SK-N-SH (cell line): ENCODE measurements at regions of chr5 and their contacts with region 1.

Region 1: DNA sequence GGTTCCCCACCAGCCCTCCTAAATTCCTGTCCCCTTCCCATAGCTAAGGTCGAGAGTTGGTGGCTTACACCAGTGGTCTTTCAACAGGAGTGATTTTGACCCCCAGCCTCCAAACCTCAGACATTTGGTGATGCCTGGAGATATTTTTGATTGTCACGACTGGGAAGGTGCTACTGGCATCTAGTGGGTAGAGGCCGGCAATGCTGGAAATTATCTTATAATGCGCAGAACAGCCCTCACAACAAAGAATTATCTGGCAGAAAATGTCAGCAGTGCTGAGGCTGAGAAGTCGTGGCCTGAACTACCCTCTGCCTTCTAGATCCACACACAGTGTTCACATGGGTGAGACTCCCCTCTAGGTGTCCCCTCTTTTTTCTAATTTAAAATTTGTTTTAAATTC is 69.6 kb downstream of the IL31RA start:
- DNase-seq: no peak
- H3K4me3 ChIP-seq: no peak overlapping the region
- H3K27ac ChIP-seq: no peak overlapping the region
- H3K4me1 ChIP-seq: no peaks in the 10 kb centered on the region
- H3K27me3 ChIP-seq: no peaks in the 10 kb centered on the region
- CTCF ChIP-seq: peak; percentile 55
- EP300 ChIP-seq: no peak
- RAD21 ChIP-seq: peak; percentile 73

Region 2: GRCh38 chr5:55897905-55898304 is 22.9 kb before region 1 on chr5:
- CTCF ChIA-PET with region 1: interaction called, 10 read pairs
- POLR2A ChIA-PET with region 1: no interaction called
- DNase-seq: peak; percentile 87
- H3K4me3 ChIP-seq: peak overlapping the region; percentile 27 to 40
- H3K27ac ChIP-seq: peak overlapping the region; percentile 26 to 37; a peak in 2 of 4 replicates
- H3K4me1 ChIP-seq: peaks cover 7 to 10% of the 10 kb centered on the region in 2 experiments; a peak in 3 of 4 replicates
- H3K27me3 ChIP-seq: no peaks in the 10 kb centered on the region
- CTCF ChIP-seq: no peak
- EP300 ChIP-seq: peak; percentile 33 to 63; a peak in 3 of 4 replicates
- RAD21 ChIP-seq: no peak